Endothelial cell of umbilical vein (primary cell): ENCODE measurements at regions of chr4 and their contacts with region 1.

Region 1: DNA sequence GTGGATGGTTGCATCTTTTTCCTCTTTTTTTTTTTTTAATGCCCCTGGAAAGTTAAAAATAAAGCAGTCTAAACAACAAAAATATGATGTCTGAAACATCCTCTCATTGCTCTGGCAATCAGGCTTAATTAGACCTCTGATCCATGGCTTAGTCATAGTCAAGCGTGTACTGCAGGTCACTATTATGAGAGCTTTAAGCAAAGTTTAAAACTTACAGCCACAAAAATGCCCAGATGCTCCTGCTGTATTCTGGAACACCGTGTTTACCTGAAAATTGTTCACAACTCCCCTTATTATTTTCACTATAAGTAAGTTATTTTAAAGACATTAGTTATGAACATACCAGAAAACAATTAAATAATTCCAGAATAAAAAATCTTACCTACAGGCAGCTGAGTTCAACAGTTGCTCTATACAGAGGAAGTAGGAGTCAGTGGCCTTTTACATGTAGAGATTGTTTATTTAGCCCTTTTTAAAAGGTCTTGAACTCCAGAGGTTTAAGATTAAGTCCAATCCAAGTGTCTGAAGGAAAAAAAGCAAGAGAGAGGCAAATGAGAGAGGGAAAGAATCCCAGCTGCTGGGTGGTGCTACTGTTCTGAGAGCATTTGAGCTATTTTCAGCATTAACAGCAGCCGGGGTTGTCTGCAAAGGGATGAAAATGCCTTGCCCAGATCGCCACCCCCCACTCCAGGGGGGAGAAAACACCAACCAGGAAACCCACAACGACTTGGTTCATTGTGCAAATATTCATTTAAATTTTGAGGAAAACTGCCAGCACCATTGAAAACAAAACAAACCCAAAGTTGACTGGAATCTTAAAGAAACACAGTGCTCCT is 36.9 kb downstream of the SORBS2 start:
- DNase-seq: peak; percentile 92
- H3K4me3 ChIP-seq: peak overlapping the region; percentile 50 to 88 (median 62)
- H3K27ac ChIP-seq: peak overlapping the region; percentile 91
- H3K4me1 ChIP-seq: peaks cover 46% of the 10 kb centered on the region
- H3K27me3 ChIP-seq: no peaks in the 10 kb centered on the region
- CTCF ChIP-seq: no peak
- POLR2A ChIP-seq: peak; percentile 69

Region 2: DNA sequence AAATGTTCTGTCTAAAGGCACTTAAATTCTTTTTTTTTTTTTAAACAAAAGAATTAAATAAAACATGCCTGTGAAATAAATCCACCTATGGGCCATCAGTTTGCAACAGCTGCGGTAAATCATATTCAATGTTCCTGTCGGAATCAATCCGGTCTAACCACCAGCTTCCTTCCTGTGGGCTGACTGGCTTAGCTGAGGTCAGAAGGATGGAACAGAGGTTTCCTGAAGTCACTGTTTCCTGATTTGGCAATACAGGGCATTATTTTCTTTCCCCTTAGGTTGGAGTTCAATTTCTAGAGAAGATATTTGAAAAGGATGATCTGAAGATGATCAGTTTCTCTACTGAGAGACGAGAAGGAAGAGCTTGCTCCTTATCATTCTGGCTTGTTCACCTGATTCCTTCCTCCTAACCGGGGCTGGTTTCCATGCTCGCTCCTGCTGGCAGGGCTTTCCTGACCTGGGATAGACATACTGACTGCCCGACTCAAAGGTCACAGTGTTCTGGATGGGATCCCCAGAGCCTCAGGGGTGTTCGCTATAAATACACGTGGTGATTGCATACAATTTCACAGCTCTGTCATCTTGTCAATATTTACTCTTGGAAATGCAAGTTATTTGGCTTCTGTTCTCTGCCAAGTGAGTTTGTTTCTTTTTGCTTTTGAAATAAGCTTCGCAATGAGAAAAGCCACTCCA is 261.4 kb before region 1 on chr4:
- CTCF ChIA-PET with region 1: no interaction called
- POLR2A ChIA-PET with region 1: no interaction called
- dilution Hi-C with region 1: no loop called
- intact Hi-C with region 1: loop called (anchors 5 kb)
- DNase-seq: peak; percentile 86
- H3K4me3 ChIP-seq: peak overlapping the region in 1 of 3 experiments; percentile 10
- H3K27ac ChIP-seq: peak overlapping the region; percentile 85
- H3K4me1 ChIP-seq: peaks cover 24% of the 10 kb centered on the region
- H3K27me3 ChIP-seq: no peaks in the 10 kb centered on the region
- CTCF ChIP-seq: no peak
- POLR2A ChIP-seq: no peak

Region 3: DNA sequence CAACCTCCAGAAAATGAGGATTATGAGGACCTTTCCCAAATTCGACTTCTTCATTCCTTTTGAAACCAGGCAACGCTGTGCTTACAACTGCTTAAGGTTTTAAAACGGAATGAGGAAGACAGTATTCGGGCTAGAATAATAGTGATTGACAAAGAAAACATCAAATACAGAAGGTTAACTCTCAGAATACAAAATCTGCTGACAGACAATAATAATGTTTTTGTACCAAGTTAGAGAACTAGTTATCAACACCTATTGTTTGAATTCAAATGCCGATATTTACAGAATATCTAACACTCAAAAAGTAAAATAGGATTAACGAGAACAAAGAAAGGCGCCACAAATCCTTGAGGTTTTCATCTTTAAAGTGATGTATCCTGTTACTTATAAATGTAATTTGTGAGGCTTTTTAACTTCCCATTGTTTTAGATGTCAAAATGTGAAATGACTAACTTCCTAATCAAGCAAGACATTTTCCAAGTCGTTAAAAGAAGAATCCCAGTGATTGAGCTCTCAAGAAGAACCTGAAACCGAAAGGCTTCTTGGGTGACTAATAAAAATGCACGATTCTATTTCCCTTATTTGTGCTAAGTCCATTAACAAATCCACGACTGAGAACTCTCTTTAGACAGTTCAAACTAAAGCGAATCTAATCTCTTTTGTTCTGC is 81.4 kb before region 1 on chr4:
- CTCF ChIA-PET with region 1: interaction called, 6 read pairs
- POLR2A ChIA-PET with region 1: no interaction called
- dilution Hi-C with region 1: no loop called
- intact Hi-C with region 1: loop called (anchors 5 kb)
- DNase-seq: peak; percentile 90
- H3K4me3 ChIP-seq: peak overlapping the region; percentile 1 to 46 (median 9)
- H3K27ac ChIP-seq: peak overlapping the region; percentile 84
- H3K4me1 ChIP-seq: peaks cover 19% of the 10 kb centered on the region
- H3K27me3 ChIP-seq: no peaks in the 10 kb centered on the region
- CTCF ChIP-seq: no peak
- POLR2A ChIP-seq: peak; percentile 22

Region 4: GRCh38 chr4:185742766-185743165 is 32.3 kb before region 1 on chr4:
- CTCF ChIA-PET with region 1: no interaction called
- POLR2A ChIA-PET with region 1: no interaction called
- dilution Hi-C with region 1: no loop called
- intact Hi-C with region 1: loop called (anchors 2 kb)
- DNase-seq: no peak
- H3K4me3 ChIP-seq: no peak overlapping the region
- H3K27ac ChIP-seq: no peak overlapping the region
- H3K4me1 ChIP-seq: peaks cover 16% of the 10 kb centered on the region
- H3K27me3 ChIP-seq: no peaks in the 10 kb centered on the region
- CTCF ChIP-seq: no peak
- POLR2A ChIP-seq: no peak

Region 5: DNA sequence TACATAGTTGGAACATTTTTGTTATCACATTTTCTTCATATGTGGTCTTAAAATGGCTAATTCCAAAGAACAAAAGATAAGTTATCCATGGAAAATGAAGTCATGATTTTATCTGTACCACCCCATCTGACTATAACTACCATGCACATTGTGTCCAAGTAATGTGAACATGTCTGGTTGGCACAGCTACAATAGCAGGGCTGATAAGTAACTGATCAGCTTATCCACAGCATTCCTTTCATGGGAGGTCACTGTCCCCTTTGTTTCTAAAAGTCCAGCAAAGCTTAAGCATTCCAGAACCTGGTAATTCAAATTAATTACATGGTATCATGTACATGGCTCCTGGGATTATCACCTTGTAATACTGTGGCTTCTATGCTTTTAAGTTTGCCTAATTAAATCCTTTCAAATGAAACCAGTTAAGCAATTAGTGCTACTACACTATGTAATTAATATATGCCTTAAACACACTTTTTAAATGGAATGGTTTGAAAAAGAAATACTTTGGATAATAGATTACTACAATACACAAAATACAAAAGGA is 58.1 kb after region 1 on chr4:
- CTCF ChIA-PET with region 1: interaction called, 3 read pairs
- POLR2A ChIA-PET with region 1: no interaction called
- dilution Hi-C with region 1: no loop called
- intact Hi-C with region 1: loop called (anchors 1 kb)
- DNase-seq: peak; percentile 92
- H3K4me3 ChIP-seq: no peak overlapping the region
- H3K27ac ChIP-seq: peak overlapping the region; percentile 67
- H3K4me1 ChIP-seq: peaks cover 26% of the 10 kb centered on the region
- H3K27me3 ChIP-seq: no peaks in the 10 kb centered on the region
- CTCF ChIP-seq: no peak
- POLR2A ChIP-seq: no peak

Region 6: DNA sequence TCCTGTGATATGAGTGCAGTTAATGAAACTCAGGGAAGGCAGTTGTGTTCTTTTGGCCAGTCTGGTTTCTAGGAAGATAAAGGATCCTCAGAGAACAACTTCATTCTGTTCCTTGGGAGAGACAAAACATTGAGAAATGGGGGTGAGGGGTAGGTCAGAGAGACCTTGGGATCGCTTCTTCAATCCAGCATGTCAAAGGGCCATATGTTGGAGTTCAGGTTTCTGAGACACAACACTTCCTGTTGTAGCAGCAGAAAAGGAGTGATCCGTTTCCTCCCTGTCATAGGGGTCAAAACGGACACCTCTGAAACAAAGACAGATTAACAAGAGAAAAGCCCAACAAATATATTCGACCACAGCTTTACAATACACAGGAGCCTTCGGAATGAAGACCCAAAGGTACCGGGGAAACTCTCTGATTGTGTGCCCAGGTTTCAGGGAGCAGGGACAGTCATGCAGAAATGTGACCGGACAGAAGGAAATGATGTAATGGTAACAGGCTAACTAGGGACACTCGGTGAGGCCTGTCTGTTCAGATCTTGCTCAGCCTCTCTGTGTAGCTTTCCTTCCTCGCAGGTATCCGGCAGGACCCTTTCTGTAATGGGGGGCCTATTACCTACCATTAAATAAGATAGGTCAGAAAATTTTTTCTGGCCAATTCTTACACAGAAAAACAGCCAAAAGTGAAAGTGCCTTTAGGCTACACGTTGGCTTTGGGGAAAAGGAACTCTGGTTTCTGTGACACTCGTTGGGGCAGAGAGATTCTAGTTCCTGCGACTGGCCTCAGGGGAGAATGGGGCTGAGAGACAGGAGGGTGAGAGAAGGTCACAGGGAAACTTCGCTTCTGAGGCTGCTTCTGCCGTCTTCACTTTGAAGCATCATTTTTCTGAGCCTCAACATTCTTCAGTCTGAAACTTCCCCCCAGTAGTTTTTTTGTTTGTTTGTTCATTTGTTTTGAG is 190.6 kb after region 1 on chr4:
- CTCF ChIA-PET with region 1: no interaction called
- POLR2A ChIA-PET with region 1: no interaction called
- dilution Hi-C with region 1: no loop called
- intact Hi-C with region 1: loop called (anchors 2 kb)
- DNase-seq: peak; percentile 42
- H3K4me3 ChIP-seq: no peak overlapping the region
- H3K27ac ChIP-seq: peak overlapping the region; percentile 58
- H3K4me1 ChIP-seq: peaks cover 17% of the 10 kb centered on the region
- H3K27me3 ChIP-seq: no peaks in the 10 kb centered on the region
- CTCF ChIP-seq: no peak
- POLR2A ChIP-seq: no peak